Heart left ventricle (tissue), 16 donors: ENCODE measurements at regions of chr11 and their contacts with region 1.

Region 1: GRCh38 chr11:12303421-12304149 is 73.8 kb upstream of the PARVA start:
- DNase-seq: no peak
- ATAC-seq: no peak
- H3K4me3 ChIP-seq: no peak overlapping the region
- H3K27ac ChIP-seq: no peak overlapping the region
- H3K4me1 ChIP-seq: no peaks in the 10 kb centered on the region
- H3K27me3 ChIP-seq: no peaks in the 10 kb centered on the region
- CTCF ChIP-seq: no peak
- POLR2A ChIP-seq: no peak

Region 2: DNA sequence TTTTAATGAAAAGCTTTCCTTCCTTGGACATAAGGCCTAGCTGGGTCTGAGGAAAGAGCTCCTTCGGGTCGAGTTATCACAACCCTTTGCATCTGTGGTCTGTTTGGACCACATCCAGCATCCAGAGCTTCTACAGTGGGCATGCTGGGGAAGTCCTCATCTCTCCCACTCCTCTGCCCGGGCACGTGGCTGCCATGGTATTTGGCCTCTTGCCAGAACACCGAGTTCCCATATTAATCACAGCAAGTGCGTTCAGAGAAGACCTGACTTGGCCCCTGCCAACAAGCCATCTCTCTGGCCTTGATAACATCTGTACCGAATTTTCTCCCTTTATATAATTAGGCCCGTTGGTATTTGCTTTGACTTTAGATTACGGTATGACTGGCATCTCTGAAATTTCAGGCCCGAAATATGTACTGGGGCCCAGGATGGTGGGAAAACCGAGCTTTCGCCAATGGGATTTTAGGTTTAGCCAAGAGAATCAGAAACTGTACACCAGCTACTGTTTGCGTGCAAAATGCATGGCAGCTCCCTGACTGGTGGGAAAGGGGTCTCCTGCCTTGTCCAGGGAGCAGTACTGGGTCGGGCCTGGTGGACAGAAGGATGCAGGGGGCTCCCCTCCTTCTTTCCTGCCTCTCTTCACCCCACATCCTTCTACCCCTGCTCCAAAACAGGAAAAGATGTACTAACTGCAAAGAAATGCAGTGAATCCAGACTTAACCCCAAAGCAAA is 103.1 kb before region 1 on chr11:
- intact Hi-C with region 1: no loop called
- DNase-seq: peak in 4 of 5 donors; percentile 64 to 82 (median 70)
- ATAC-seq: peak; percentile 11 to 49 (median 34)
- H3K4me3 ChIP-seq: no peak overlapping the region
- H3K27ac ChIP-seq: peak overlapping the region; percentile 34 to 97 (median 85)
- H3K4me1 ChIP-seq: peaks cover 4 to 59% (median 43%) of the 10 kb centered on the region in 12 donors
- H3K27me3 ChIP-seq: no peaks in the 10 kb centered on the region
- CTCF ChIP-seq: no peak
- POLR2A ChIP-seq: no peak

Region 3: GRCh38 chr11:12769834-12770345 is 466.3 kb after region 1 on chr11:
- intact Hi-C with region 1: loop called in 1 of 10 experiments (anchors 10 kb)
- DNase-seq: no peak
- ATAC-seq: peak in 1 of 4 donors; percentile 43
- H3K4me3 ChIP-seq: no peak overlapping the region
- H3K27ac ChIP-seq: peak overlapping the region in 2 of 12 donors; percentile 5 to 15
- H3K4me1 ChIP-seq: peaks cover 3 to 76% (median 54%) of the 10 kb centered on the region in 12 donors
- H3K27me3 ChIP-seq: no peaks in the 10 kb centered on the region
- CTCF ChIP-seq: no peak
- POLR2A ChIP-seq: no peak